Endothelial cell of umbilical vein (primary cell): ENCODE measurements at regions of chr16 and their contacts with region 1.

Region 1: GRCh38 chr16:2874912-2875362 is 8.1 kb upstream of the FLYWCH2 start:
- DNase-seq: peak; percentile 63
- H3K4me3 ChIP-seq: no peak overlapping the region
- H3K27ac ChIP-seq: no peak overlapping the region
- H3K4me1 ChIP-seq: no peaks in the 10 kb centered on the region
- H3K27me3 ChIP-seq: peaks cover 0 to 2% of the 10 kb centered on the region in 2 experiments
- CTCF ChIP-seq: peak; percentile 98
- POLR2A ChIP-seq: no peak

Region 2: DNA sequence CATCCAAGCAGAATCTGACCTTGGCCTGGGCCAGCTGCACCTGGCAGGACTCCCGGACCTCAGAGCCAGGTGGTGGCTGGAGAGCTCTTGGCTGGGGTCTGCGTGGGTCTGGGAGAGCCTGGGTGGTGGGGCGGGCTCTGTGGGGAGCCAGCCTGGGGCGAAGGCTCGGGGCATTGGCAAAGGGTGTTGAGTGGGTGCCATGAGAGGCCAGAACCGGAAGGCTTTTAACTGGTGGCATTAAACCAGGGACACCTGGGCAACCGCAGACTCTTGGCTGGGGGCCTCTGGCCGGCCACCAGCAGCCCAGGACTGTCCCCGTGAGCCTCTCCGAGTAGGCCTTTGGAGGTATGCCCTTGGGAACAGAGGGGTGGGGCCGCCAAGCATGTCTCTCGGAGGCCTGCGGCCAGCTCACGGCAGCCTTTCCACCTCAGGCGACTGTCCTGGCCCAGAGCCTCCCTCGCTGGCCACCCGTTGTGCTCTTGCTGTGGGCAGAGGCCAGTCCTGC is 171.6 kb before region 1 on chr16:
- CTCF ChIA-PET with region 1: no interaction called
- POLR2A ChIA-PET with region 1: no interaction called
- dilution Hi-C with region 1: no loop called
- intact Hi-C with region 1: no loop called
- DNase-seq: no peak
- H3K4me3 ChIP-seq: no peak overlapping the region
- H3K27ac ChIP-seq: no peak overlapping the region
- H3K4me1 ChIP-seq: no peaks in the 10 kb centered on the region
- H3K27me3 ChIP-seq: no peaks in the 10 kb centered on the region
- CTCF ChIP-seq: no peak
- POLR2A ChIP-seq: no peak

Region 3: DNA sequence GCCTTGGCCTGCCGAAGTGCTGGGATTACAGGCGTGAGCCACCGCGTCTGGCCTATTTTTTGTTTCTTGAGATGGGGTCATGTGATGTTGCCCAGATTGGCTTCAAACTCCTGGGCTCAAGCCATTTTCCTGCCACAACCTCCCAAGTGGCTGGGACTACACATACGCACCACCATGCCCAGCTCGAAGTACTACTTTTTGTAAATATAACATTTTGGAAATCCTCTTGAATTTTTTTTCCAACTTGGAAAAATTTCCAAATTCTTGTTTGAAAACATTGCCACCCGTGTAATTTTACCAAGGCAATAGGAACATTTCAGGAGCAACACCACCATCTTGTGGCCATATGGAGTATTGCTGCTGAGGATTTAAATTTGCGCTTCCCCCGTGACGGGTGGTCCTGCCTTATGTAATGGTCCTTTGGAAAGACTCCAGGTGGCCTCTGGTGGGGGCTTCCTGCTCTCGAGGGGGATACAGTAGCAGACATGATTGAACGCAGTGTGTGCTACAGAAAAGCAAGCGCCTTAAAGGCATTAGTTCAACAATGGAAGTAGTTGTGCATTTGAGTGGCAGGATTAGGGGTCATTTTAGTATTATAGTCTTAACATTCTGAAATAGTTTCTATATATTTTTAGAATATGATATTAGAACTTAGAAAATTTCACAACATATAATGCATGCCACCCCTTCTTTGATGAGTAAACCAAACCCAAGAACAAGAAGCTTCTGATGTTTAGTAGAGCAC is 44.7 kb after region 1 on chr16:
- CTCF ChIA-PET with region 1: interaction called, 12 read pairs
- POLR2A ChIA-PET with region 1: no interaction called
- dilution Hi-C with region 1: no loop called
- intact Hi-C with region 1: loop called (anchors 1 kb)
- DNase-seq: peak; percentile 74
- H3K4me3 ChIP-seq: no peak overlapping the region
- H3K27ac ChIP-seq: no peak overlapping the region
- H3K4me1 ChIP-seq: peaks cover 16% of the 10 kb centered on the region
- H3K27me3 ChIP-seq: no peaks in the 10 kb centered on the region
- CTCF ChIP-seq: peak; percentile 64 to 80
- POLR2A ChIP-seq: no peak

Region 4: DNA sequence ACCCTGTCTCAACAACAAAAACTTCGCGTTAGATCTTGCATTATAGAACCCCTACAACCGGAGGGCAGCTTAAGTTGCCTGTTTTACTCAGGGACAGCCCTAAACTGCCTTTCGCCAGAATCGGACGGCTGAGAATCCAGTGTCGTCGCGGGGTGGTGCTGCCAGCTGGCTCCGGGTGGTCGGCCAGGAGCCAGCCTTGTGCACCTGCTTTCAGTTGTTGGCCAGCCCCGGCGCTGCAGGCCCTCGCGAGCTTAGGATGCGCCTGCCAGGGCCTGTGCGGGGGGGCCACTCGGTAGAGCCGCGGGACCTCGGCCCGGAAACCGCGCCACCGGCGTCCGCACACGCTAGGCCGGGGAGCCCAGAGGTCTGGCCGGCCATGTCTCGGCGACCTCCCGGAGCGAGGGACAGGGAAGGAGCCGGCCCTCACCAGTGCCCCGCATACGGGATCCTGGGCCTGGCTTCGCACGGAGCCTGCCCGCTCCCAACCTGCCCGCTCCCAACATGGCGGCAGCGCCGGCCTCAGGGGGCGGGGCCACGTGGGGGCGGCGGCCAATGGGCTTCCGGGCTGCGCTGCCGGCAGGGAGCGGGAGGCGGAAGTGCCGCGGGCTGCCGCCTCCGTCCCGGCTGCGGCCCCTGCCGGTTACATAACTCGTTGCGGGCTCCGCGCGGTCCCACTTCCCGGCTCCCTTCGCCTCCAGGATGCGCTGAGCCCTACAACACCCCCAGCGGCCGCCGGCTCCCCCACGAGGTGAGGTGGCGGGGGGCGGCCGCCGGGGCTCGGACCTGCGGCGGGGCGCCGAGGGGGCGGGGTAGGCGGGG is 582.7 kb after region 1 on chr16:
- CTCF ChIA-PET with region 1: no interaction called
- POLR2A ChIA-PET with region 1: no interaction called
- dilution Hi-C with region 1: no loop called
- intact Hi-C with region 1: no loop called
- DNase-seq: peak; percentile 88
- H3K4me3 ChIP-seq: peak overlapping the region; percentile 44 to 62 (median 47)
- H3K27ac ChIP-seq: peak overlapping the region; percentile 77
- H3K4me1 ChIP-seq: peaks cover 27% of the 10 kb centered on the region
- H3K27me3 ChIP-seq: no peaks in the 10 kb centered on the region
- CTCF ChIP-seq: peak; percentile 38 to 64
- POLR2A ChIP-seq: peak; percentile 77